ENCODE measurements at regions of chr1 and their contacts with region 1.

Region 1: DNA sequence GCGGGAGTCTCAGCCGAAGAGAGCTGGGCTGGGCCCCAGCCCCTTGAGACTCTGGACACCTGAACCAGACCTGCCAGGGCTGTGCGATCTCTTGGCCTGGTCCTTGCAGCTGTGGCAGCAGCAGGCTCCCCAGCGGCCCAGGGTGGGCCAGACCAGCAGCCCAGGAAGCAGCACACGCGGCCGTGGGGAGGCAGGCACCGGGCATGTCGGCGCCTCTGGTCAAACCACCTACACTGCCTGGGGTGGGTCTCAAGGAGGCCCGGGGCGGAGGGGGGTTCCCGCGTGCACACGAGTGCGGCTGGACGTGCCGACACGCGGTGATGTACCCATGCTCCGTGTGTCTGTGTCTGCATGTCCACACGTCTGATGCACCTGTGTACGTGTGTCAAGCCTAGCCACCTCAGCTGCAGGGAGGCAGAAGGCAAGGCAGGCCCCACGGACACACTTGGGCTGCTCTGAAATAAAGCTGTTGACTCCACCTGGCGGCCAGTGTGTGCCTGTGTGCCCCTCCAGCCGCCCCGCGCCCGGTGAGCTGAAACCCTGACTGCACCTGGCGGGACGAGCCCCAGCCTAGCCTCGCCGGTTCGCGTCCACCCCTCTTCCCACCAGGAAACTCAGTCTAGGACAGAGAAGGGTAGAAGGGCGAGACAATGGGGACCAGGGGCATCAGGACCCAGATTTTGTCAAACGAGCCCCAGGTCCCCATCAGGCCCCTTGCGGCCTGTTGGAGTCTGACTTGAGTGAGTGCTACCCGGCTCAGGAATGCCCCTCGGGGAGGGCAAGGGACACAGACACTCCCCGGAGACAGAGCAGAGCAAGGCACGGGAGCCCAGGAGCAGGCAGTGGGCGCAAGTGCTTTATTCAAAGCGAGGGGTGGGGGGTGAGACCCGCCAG is 11.6 kb downstream of the SCNN1D start:
- DNase-seq: peak; percentile 56 to 65
- H3K4me3 ChIP-seq: no peak overlapping the region
- H3K27ac ChIP-seq: no peak overlapping the region
- H3K4me1 ChIP-seq: peaks cover 16% of the 10 kb centered on the region
- H3K27me3 ChIP-seq: no peaks in the 10 kb centered on the region
- CTCF ChIP-seq: peak; percentile 80

Region 2: DNA sequence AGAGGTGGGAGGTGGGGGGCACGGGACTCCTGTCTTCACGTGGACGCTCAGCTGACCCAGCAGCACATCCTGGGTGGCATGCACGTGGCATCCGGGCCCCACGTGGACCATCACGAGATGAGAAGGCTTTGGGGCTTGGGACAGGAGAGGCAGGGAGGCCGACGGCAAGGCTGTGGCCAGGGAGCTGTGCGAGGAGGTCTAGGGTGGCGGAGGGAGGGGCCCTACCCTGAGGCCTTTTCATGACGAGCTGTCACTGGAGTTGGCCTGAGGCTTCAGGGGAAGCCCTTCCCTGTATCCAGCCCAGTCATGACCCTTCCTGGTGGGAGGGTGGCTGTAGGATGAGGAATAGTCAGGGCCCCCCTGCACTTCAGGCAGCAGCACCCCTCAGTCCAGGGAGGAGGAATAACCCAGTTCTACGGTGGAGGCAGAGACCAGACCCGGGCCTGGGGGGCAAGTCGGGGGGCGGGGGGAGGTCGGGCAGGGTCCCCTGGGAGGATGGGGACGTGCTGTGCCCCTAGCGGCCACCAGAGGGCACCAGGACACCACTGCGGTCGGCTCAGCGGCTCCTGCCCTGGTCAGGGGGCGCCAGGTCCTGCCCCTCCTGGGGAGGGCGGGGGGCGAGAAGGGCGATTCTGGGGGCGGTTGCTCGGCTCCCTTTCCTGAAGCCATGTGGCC is 307.9 kb before region 1 on chr1:
- CTCF ChIA-PET with region 1: no interaction called
- POLR2A ChIA-PET with region 1: interaction called, 5 read pairs
- intact Hi-C with region 1: loop called (anchors 5 kb)
- DNase-seq: peak in 1 of 2 experiments; percentile 55
- H3K4me3 ChIP-seq: no peak overlapping the region
- H3K27ac ChIP-seq: no peak overlapping the region
- H3K4me1 ChIP-seq: no peaks in the 10 kb centered on the region
- H3K27me3 ChIP-seq: no peaks in the 10 kb centered on the region
- CTCF ChIP-seq: peak; percentile 92

Region 3: DNA sequence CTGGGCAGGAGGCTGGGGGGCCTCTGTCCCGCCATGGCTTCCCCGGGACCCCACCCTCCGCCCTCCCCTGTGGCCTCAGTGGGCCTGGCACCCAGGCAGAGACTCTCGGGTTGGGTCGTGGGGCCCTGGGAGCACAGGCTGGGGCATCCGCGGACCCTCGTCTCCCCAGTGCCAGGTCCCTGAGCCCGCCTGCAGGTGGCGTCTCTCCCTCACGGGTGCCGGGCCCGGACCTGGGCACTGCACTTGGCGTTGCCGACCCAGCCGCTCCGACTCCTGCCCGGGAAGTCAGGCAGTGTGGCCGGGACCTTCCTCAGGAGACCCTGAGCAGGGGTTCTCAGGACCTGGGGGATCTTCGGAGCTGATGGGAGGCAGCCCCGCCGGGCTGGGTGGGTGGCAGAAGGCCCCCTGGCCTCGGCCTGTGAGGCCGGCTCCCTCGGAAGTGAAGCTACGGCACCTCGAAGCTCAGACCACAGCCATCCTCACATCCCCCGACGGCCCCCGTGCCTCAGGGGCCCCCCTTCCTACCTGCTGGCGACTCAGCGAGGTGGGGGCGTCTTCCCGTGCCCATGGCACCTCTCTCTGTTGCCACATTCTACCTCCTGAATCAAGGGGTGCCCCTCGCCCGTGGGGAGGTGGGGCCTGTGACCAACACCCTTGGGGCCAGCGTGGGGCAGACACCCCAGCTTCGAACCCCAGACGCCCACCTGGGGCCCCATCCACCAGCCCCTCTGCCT is 169.6 kb before region 1 on chr1:
- CTCF ChIA-PET with region 1: interaction called, 5 read pairs
- POLR2A ChIA-PET with region 1: no interaction called
- intact Hi-C with region 1: loop called (anchors 2 kb)
- DNase-seq: peak in 1 of 2 experiments; percentile 82
- H3K4me3 ChIP-seq: peak overlapping the region; percentile 29; the same call in 1 of the 2 replicates
- H3K27ac ChIP-seq: no peak overlapping the region
- H3K4me1 ChIP-seq: peaks cover 22% of the 10 kb centered on the region
- H3K27me3 ChIP-seq: no peaks in the 10 kb centered on the region
- CTCF ChIP-seq: peak; percentile 86

Region 4: GRCh38 chr1:1250786-1251284 is 41.0 kb before region 1 on chr1:
- CTCF ChIA-PET with region 1: no interaction called
- POLR2A ChIA-PET with region 1: no interaction called
- intact Hi-C with region 1: no loop called
- DNase-seq: no peak
- H3K4me3 ChIP-seq: no peak overlapping the region
- H3K27ac ChIP-seq: no peak overlapping the region
- H3K4me1 ChIP-seq: no peaks in the 10 kb centered on the region
- H3K27me3 ChIP-seq: no peaks in the 10 kb centered on the region
- CTCF ChIP-seq: no peak

Region 5: GRCh38 chr1:1307908-1308755 is 16.3 kb after region 1 on chr1 and contains the starts of genes ACAP3 and PUSL1:
- CTCF ChIA-PET with region 1: no interaction called
- POLR2A ChIA-PET with region 1: interaction called, 16 read pairs
- intact Hi-C with region 1: no loop called
- DNase-seq: peak; percentile 72 to 89
- H3K4me3 ChIP-seq: peak within 1 kb of the TSS; percentile 84
- H3K27ac ChIP-seq: peak within 1 kb of the TSS; percentile 41
- H3K4me1 ChIP-seq: peaks cover 36% of the 10 kb centered on the region
- H3K27me3 ChIP-seq: no peaks in the 10 kb centered on the region
- CTCF ChIP-seq: no peak
- total RNA-seq, gene ACAP3: 53.5 and 54.8 TPM in 2 replicates
- total RNA-seq, gene PUSL1: 18.0 and 18.9 TPM in 2 replicates

Region 6: DNA sequence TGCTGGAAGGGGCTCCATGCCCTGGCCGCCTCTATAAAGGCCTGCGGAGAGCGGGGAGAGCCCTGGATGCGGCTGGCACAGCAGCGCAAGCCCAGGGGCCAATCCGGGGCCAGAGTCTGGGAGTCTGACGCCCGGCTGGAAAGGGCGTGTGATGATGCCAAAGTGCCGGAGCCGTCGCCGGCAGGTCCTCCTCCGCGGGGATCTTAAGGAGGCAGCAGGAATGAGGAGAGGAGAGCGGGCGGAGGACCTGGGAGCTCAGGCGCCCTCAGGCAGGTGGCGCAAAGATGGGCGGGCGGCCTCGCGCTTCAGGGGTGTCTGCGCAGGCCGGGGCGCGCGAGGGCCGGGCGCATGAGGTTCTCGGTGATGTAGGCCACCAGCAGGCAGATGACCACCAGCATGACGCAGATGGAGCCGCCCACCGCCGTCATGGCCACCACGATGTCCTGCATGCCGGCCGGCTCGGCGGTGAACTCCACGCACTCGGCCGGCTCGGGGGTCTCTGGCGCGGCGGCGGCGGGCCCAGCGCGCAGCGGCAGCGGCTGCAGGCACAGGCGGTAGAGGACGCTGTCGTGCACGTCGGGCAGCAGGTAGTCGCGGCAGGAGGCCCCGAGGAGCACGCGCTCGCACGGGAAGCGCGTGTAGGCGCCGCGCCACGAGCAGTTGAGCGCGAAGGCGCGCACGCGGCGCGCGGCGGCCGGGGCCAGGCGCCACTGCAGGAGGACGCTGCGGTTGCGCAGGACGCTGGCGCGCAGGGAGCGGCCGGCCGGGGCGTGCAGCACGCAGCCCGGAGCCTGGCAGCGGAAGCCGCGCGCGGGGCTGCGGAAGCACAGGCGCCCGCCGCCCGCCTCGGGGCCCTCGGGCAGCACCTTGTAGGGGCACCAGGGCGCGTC is 307.5 kb after region 1 on chr1:
- CTCF ChIA-PET with region 1: no interaction called
- POLR2A ChIA-PET with region 1: no interaction called
- intact Hi-C with region 1: no loop called
- DNase-seq: no peak
- H3K4me3 ChIP-seq: no peak overlapping the region
- H3K27ac ChIP-seq: no peak overlapping the region
- H3K4me1 ChIP-seq: no peaks in the 10 kb centered on the region
- H3K27me3 ChIP-seq: peaks cover 18% of the 10 kb centered on the region; the same call in 1 of the 2 replicates
- CTCF ChIP-seq: no peak